ENCODE measurements at regions of chr2 and their contacts with region 1.

Region 1: GRCh38 chr2:112121682-112122254 is 16.4 kb upstream of the FBLN7 start:
- DNase-seq: peak; percentile 22
- H3K4me3 Mint-ChIP-seq: no peak overlapping the region
- H3K27ac Mint-ChIP-seq: no peak overlapping the region
- H3K4me1 Mint-ChIP-seq: peaks cover 7% of the 10 kb centered on the region
- H3K27me3 Mint-ChIP-seq: no peaks in the 10 kb centered on the region

Region 2: DNA sequence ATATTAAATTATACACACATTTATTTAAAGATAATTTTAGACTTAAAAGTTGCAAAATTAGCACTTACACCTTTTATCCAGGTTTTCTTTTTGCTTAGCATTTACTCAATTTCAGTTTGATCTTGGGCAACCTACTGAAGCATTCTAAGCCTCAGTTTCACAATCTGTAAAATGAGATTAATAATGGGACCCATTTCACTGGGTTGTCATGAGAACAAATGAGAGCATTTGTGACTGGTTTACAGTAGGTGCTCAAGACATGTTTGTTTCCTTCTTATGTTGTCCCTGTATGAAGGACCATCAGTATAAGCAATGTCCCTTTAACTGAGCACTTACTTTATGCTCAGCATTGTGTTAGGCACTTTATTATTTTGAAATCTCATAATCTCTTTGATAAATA is 11.6 kb after region 1 on chr2:
- CTCF ChIA-PET with region 1: interaction called, 11 read pairs
- POLR2A ChIA-PET with region 1: interaction called, 3 read pairs
- intact Hi-C with region 1: no loop called
- DNase-seq: no peak
- H3K4me3 Mint-ChIP-seq: no peak overlapping the region
- H3K27ac Mint-ChIP-seq: no peak overlapping the region
- H3K4me1 Mint-ChIP-seq: peaks cover 12% of the 10 kb centered on the region
- H3K27me3 Mint-ChIP-seq: peaks cover 8% of the 10 kb centered on the region

Region 3: DNA sequence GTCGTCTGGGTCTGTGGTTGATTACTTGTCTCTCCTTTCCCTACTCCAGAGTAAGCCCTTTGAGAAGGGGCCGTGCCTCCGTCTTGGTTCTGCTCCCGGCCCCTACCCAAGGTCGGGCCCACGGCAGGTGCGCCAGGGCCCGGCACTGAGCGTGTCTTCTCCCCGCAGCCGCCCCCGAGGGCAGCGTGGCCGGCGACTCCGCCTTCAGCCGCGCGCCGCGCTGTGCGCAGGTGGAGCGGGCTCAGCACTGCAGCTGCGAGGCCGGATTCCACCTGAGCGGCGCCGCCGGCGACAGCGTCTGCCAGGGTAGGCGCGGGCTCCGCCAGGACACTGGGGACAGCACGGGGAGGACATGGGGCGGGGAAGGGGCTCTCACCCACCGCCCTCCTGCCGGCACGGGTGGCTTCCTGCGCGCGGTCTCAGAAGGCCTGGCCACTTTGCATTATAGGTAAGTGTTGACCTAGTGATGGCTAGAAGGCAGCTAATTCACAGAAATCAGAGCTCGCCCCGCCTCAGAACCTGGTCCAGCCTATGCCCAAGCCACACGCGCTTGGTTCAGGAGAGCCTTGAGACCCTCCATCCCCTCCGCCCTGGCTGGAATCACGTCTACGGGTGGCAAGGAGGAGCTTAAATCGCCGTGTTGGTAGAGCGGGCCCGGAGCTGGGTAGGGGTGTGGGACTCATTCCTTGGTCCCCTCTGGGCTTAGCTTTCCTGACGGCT is 60.0 kb after region 1 on chr2:
- CTCF ChIA-PET with region 1: interaction called, 12 read pairs
- POLR2A ChIA-PET with region 1: no interaction called
- intact Hi-C with region 1: loop called (anchors 5 kb)
- DNase-seq: peak; percentile 78
- H3K4me3 Mint-ChIP-seq: peak overlapping the region; percentile 88
- H3K27ac Mint-ChIP-seq: peak overlapping the region; percentile 98
- H3K4me1 Mint-ChIP-seq: peaks cover 66% of the 10 kb centered on the region
- H3K27me3 Mint-ChIP-seq: no peaks in the 10 kb centered on the region

Region 4: DNA sequence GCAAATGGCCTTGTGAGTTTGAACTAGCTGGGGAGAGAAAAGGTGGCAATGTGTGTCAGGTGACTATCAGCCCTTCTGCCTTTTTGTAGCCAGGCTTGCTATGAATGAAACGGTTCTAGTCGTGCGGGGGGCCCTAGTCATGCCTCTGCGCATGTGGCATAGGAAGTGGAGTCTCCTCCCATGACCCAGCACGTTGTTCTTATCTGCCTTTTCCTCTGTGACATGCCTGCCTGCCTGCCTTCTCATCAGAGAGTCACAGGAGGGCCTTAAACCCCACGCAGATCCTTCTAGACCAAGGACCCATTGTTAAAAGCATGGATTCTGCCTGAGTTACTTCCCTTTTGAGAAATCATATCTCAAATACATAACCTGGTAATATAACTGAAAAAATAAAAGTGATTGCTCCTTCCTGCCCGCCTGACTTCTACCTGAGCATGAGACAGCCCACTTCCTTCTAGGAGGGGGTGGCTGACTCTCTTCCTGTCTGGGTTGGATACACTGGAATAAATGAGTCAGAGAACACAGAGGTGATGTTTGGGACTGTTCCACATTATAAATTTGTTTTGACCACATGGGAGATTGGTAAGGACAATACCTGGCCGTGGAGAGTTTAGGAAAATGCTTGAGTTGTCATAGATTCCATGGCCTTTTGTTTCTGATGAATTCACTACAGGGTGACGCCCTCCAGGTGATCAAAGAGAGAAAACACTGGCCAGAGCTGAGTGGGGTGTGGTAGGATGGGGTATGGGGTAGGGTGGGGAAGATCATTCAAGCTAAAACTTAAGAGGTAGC is 66.2 kb after region 1 on chr2:
- CTCF ChIA-PET with region 1: interaction called, 12 read pairs
- POLR2A ChIA-PET with region 1: no interaction called
- intact Hi-C with region 1: loop called (anchors 5 kb)
- DNase-seq: peak; percentile 91
- H3K4me3 Mint-ChIP-seq: peak overlapping the region; percentile 38
- H3K27ac Mint-ChIP-seq: peak overlapping the region; percentile 94
- H3K4me1 Mint-ChIP-seq: peaks cover 85% of the 10 kb centered on the region
- H3K27me3 Mint-ChIP-seq: no peaks in the 10 kb centered on the region

Region 5: DNA sequence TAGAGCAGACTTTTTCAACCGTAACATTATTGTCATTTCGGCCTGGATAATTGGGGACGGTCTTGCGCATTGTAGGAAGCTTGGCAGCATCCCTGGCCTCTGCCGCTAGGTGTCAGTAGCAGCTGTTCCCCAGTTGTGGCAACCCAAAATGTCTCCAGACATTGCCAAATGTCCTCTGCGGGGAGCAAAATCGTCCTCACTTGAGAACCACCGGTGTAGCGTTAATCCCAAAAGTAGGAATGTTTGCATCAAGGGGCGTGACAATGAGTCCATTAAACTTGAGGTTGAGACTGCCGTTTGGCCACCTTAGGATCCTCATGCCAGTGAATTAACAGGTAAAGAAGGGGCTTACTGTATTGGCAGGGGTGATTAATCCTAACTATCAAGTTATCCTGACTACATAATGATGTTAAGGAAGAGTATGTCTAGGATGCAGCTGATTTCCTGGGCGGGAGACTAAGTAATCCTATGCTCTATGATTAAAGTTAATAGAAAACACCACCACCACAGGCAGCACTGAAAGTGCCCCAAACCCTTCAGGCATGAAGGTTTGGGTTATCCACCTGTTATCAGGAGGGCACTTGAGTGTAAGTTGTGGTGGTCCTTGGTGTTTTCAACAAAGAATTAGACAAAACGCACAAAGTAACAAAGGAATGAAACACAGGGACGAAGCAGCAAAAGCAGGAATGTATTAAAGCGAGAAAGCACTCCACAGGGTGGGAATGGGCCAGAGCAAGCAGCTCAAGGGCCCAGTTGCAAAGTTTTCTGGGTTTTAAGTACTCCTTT is 137.9 kb after region 1 on chr2:
- CTCF ChIA-PET with region 1: interaction called, 18 read pairs
- POLR2A ChIA-PET with region 1: interaction called, 3 read pairs
- intact Hi-C with region 1: loop called (anchors 5 kb)
- DNase-seq: peak; percentile 90
- H3K4me3 Mint-ChIP-seq: peak overlapping the region; percentile 54
- H3K27ac Mint-ChIP-seq: no peak overlapping the region
- H3K4me1 Mint-ChIP-seq: peaks cover 13% of the 10 kb centered on the region
- H3K27me3 Mint-ChIP-seq: no peaks in the 10 kb centered on the region

Region 6: GRCh38 chr2:112433932-112434730 is 312.4 kb after region 1 on chr2:
- CTCF ChIA-PET with region 1: interaction called, 6 read pairs
- POLR2A ChIA-PET with region 1: no interaction called
- intact Hi-C with region 1: loop called (anchors 1 kb)
- DNase-seq: no peak
- H3K4me3 Mint-ChIP-seq: no peak overlapping the region
- H3K27ac Mint-ChIP-seq: no peak overlapping the region
- H3K4me1 Mint-ChIP-seq: peaks cover 14% of the 10 kb centered on the region
- H3K27me3 Mint-ChIP-seq: peaks cover 9% of the 10 kb centered on the region